Endothelial cell of umbilical vein (primary cell): ENCODE measurements at regions of chr11 and their contacts with region 1.

Region 1: DNA sequence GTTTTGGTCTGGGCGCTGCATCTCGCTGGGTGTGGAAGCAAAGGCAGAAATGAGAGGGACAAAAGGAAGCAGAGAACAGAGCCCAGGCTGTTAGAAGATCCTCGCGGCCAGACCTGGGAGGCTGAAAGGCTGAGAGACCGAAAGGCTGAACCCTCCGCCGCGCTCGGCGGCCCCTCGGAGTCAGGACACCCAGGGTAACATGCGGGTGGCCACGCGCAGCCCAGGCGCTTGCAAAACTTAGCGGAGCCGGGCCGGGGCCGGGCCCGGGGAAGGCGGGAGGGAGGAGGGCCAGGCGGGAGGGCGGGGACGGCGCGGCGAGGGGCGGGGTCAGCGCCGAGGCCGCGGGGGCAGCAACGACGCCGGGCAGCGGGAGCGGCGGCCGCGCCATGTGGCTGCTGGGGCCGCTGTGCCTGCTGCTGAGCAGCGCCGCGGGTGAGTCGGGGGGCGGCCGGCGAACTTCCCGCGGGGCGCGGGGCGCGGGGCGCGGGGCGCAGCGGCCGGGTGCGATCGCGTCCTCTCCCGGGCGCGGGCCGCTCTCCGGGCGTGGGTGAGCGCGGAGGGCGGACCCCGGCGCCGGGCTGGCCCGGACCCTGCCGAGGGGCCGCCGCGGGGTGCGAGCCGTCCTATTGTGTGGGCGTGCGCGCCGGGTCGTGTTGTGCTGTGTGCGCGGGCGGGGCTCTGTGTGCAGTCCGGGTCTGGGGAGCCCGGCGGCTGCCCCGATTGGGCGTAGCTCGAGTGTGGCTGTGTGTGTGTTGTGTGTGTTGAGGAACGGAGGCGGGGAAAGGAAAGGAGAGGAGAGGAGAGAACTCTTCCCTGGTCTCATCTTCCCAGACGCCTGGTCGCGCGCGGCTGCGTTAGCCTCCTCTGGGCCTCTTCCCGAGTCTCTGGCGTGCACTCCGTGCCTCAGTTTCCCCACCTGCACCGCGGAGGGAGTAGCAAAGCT is at the start of gene LDLRAD3:
- DNase-seq: peak; percentile 72
- H3K4me3 ChIP-seq: peak within 1 kb of the TSS; percentile 62 to 82 (median 77)
- H3K27ac ChIP-seq: peak within 1 kb of the TSS; percentile 45
- H3K4me1 ChIP-seq: peaks cover 18% of the 10 kb centered on the region
- H3K27me3 ChIP-seq: no peaks in the 10 kb centered on the region
- CTCF ChIP-seq: no peak
- POLR2A ChIP-seq: peak; percentile 54
- total RNA-seq, gene LDLRAD3: 19.9 and 25.1 TPM in 2 replicates

Region 2: DNA sequence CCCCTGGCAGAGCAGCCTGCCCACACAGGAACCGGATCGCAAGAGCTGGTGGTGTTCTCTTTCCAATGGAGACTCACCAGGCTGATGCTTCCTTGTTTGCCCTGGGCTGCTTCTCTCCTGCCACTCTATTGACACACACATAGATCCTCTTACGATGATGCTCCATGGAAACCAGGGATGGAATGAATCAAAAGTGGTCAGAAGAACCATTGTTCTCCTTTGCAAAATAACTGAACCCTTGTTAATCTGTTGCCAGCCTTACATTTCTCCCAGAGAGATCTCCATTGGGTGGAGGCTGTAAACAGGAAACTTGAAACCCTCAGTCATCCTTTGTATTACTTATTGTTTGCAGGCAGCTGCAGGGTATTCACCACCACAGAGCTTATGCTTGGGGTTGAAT is 24.7 kb before region 1 on chr11:
- CTCF ChIA-PET with region 1: no interaction called
- POLR2A ChIA-PET with region 1: no interaction called
- dilution Hi-C with region 1: no loop called
- intact Hi-C with region 1: loop called (anchors 2 kb)
- DNase-seq: peak; percentile 77
- H3K4me3 ChIP-seq: no peak overlapping the region
- H3K27ac ChIP-seq: no peak overlapping the region
- H3K4me1 ChIP-seq: peaks cover 22% of the 10 kb centered on the region
- H3K27me3 ChIP-seq: peaks cover 3 to 5% of the 10 kb centered on the region in 2 experiments
- CTCF ChIP-seq: no peak
- POLR2A ChIP-seq: no peak